Psoas muscle (tissue), 8 donors: ENCODE measurements at regions of chr10 and their contacts with region 1.

Region 1: DNA sequence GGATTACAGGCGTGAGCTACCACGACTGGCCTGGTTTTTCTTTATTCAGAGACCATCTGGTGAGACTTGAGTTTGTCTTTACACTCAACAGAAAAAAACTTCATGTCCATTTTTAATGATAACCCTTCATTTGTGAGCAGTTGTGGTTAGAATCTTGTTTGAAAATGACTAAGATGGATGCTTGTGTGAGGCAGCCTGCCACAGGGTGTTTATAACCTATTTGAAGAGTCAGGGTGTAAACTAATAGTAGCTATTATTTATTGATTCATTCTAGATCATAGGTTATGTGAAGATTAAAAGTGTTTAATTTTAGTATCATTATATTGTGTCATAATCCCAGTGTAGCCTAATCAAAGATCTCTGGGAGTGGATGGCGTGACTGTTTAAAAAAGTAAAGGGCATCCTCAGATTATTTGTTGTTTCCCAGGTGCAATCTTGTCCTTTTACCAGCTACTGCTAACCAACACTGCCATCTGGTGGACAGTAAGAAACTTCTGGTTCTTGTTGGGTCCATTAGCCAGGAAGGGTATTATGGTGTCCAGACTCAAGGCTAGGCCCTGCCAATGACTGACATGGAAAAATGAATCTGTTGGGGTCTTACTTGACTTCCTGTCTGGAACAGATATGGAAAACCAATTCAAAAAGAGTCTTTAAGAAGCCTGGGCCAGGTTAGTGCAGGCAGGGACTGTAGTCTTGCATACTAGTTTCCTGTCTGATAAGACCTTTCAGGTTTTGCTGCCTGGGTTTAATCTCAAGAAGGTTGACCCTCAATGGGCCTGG is 24.9 kb downstream of the NRBF2 start:
- DNase-seq: no peak
- ATAC-seq: peak; percentile 72 to 87 (median 80)
- H3K4me3 ChIP-seq: no peak overlapping the region
- H3K27ac ChIP-seq: no peak overlapping the region
- H3K4me1 ChIP-seq: peaks cover 13% of the 10 kb centered on the region
- H3K27me3 ChIP-seq: no peaks in the 10 kb centered on the region
- CTCF ChIP-seq: peak; percentile 84

Region 2: DNA sequence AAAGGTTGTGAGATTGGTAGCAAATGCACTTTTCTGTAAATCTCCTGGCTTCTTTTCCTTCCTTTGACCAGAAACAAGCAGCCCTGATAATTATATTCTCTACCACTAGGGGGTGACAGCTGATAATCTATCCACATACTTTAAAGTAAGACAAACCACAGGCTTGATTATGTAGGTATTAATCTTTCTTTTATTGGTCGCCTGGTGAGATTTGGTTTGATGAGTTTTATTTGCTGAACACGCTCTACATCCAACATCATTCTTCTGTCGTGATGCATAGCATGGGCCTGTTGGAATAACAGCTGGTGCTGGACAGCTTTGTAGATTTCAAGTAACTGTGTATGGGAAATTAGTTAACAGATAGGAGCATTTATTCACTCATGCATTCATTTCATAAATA is 720.3 kb before region 1 on chr10:
- intact Hi-C with region 1: loop called (anchors 5 kb)
- DNase-seq: no peak
- ATAC-seq: peak in 1 of 4 donors; percentile 74
- H3K4me3 ChIP-seq: no peak overlapping the region
- H3K27ac ChIP-seq: no peak overlapping the region
- H3K4me1 ChIP-seq: no peaks in the 10 kb centered on the region
- H3K27me3 ChIP-seq: no peaks in the 10 kb centered on the region
- CTCF ChIP-seq: peak; percentile 78

Region 3: DNA sequence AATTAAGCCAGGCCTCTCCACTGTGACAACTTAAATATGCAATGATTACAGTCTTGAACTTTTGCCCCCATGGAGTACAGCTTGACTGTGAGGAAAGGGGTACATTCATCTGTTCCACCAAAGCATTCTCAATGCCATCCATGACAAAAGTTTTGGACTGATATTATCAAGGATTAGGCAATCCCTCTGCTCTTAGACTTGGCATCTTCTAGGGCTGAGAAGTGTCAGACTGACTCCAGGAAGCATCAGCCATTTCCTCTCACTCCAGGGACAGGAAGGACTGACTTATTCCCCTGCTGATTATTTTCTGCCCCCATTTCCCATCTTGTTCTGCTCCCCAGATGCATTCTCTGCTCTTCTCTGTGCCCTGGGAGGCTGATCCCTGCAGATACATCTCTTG is 714.2 kb before region 1 on chr10:
- intact Hi-C with region 1: loop called (anchors 5 kb)
- DNase-seq: no peak
- ATAC-seq: no peak
- H3K4me3 ChIP-seq: no peak overlapping the region
- H3K27ac ChIP-seq: no peak overlapping the region
- H3K4me1 ChIP-seq: no peaks in the 10 kb centered on the region
- H3K27me3 ChIP-seq: no peaks in the 10 kb centered on the region
- CTCF ChIP-seq: no peak

Region 4: DNA sequence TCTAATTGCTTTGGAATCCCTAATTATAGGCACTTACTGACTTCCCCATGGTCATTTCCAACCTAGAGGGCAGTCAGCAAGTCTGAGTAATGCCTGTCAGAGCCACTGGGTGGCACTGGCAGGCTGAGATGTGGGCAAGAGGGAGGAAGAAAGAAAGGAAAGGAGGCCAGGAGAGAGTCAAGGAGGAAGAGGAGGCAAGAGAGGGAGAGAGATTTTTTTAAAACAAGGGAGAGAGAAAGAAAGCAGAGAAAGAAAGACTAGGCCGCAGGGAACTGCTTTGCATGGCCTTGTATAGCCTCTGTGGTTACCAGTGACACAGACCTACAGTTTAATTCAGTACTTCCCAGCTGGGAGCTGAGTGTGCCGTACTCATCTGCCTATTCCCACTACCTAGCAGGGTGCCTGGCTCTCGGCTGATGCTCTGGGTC is 563.9 kb before region 1 on chr10:
- intact Hi-C with region 1: loop called (anchors 2 to 5 kb)
- DNase-seq: peak; percentile 54 to 64
- ATAC-seq: peak; percentile 77 to 90 (median 82)
- H3K4me3 ChIP-seq: no peak overlapping the region
- H3K27ac ChIP-seq: no peak overlapping the region
- H3K4me1 ChIP-seq: no peaks in the 10 kb centered on the region
- H3K27me3 ChIP-seq: no peaks in the 10 kb centered on the region
- CTCF ChIP-seq: peak; percentile 88

Region 5: DNA sequence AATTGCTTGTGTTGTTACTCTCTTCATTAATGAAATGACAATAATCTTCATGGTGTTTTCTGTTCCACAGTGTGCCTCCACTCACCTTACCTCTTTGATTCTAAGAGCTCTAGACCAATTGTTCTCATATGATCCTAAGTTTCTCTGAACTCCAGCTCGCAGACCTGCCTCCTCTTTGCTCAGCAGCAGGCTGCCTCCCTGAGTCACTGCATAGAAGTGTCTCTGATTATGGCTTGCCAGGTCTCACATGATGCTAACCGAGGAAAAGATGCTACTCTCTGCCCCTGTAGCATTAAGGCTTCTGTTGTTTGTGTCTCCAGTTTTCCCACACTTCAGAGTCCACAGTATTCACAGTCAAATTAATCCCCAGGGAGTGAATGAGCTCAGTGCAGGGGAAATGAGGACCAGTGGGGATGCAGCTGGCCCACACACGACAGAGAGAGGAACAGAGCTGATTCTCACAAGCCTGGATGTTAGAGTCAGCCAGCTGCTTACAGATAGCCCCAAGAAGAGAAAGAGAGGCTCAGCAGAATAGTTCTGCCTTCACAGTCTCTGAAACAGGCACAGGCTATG is 196.0 kb before region 1 on chr10:
- intact Hi-C with region 1: no loop called
- DNase-seq: no peak
- ATAC-seq: no peak
- H3K4me3 ChIP-seq: no peak overlapping the region
- H3K27ac ChIP-seq: no peak overlapping the region
- H3K4me1 ChIP-seq: peaks cover 3% of the 10 kb centered on the region
- H3K27me3 ChIP-seq: no peaks in the 10 kb centered on the region
- CTCF ChIP-seq: no peak

Region 6: GRCh38 chr10:63003816-63004453 is 154.1 kb before region 1 on chr10:
- intact Hi-C with region 1: loop called in 1 of 2 experiments (anchors 2 kb)
- DNase-seq: no peak
- ATAC-seq: no peak
- H3K4me3 ChIP-seq: no peak overlapping the region
- H3K27ac ChIP-seq: no peak overlapping the region
- H3K4me1 ChIP-seq: no peaks in the 10 kb centered on the region
- H3K27me3 ChIP-seq: no peaks in the 10 kb centered on the region
- CTCF ChIP-seq: peak; percentile 24

Region 7: DNA sequence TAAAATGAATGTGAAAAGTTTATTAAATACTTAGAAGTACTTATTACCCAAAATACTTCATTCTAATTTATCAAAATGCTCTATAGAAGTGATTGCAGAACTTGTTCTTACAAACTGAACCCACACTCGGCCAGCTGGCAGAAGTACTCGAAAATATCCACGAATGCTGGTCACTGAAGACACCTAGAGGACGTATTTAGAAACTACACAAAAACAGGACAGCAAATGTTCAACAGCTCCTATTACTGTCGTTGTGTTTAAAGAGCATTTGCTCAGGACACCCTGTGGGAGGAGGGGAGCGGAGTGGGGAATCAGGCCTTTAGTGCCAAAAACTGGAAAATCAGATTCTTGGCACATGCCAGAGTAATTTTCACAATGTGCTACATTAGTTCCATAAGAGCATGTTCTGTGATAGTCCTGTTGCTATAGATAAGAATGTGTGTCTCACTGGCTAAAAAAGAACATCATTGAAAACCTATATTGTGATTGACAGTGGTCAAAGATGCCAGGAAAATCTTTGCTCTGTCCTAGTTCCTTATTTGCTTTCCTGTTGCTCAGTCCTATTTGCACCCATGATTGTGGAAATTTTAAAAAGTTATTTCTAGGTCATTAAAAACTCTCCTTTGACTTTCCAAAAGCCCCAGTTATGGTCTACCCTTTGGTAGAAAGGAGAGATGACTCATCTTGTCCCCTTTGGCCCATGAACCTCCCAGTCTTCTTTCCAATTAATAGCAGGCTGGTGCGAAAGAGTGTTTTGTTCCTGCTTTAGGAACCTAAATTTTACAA is 73.9 kb before region 1 on chr10:
- intact Hi-C with region 1: loop called in 1 of 2 experiments (anchors 5 kb)
- DNase-seq: peak; percentile 58 to 75
- ATAC-seq: peak; percentile 87 to 99 (median 92)
- H3K4me3 ChIP-seq: no peak overlapping the region
- H3K27ac ChIP-seq: no peak overlapping the region
- H3K4me1 ChIP-seq: no peaks in the 10 kb centered on the region
- H3K27me3 ChIP-seq: no peaks in the 10 kb centered on the region
- CTCF ChIP-seq: peak; percentile 83